Ovary (tissue), 10 donors: ENCODE measurements at regions of chr6 and their contacts with region 1.

Region 1: DNA sequence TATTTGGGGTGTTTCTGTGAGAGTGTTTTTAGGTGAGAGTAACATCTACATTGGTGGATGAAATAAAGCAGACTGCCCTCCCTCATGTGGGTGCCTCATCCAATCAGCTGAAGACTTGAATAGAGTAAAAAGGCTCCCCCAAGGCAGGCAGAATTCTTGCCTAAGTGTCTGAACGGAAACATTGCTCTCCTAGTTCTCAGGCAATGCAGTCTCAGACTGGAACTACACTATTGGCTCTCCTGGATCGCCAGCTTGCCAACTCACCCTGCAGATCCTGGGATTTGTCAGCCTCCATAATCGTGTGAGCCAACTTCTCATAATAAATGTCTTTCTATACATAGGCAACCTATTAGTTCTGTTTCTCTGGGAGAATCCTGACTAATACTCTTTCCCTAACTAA is 5.5 kb upstream of the TMEM170B start:
- DNase-seq: no peak
- H3K4me3 ChIP-seq: no peak overlapping the region
- H3K27ac ChIP-seq: no peak overlapping the region
- H3K4me1 ChIP-seq: peaks cover 2% of the 10 kb centered on the region
- H3K27me3 ChIP-seq: no peaks in the 10 kb centered on the region
- CTCF ChIP-seq: no peak
- EP300 ChIP-seq: no peak
- POLR2A ChIP-seq: no peak

Region 2: GRCh38 chr6:13466304-13467215 is 1934.5 kb after region 1 on chr6:
- intact Hi-C with region 1: loop called in 1 of 4 experiments (anchors 5 kb)
- DNase-seq: no peak
- H3K4me3 ChIP-seq: no peak overlapping the region
- H3K27ac ChIP-seq: no peak overlapping the region
- H3K4me1 ChIP-seq: no peaks in the 10 kb centered on the region
- H3K27me3 ChIP-seq: no peaks in the 10 kb centered on the region
- CTCF ChIP-seq: no peak
- EP300 ChIP-seq: no peak
- POLR2A ChIP-seq: no peak